ENCODE measurements at regions of chr3 and their contacts with region 1.

Region 1: GRCh38 chr3:113696658-113697499 is 437 bp upstream of the USF3 start:
- DNase-seq: peak; percentile 98 to 100
- H3K4me3 ChIP-seq: peak overlapping the region; percentile 93 to 98
- H3K27ac ChIP-seq: peak overlapping the region; percentile 98 to 99
- H3K4me1 ChIP-seq: peaks cover 0 to 17% of the 10 kb centered on the region in 2 donors
- H3K27me3 ChIP-seq: no peaks in the 10 kb centered on the region
- CTCF ChIP-seq: peak in 1 of 3 experiments; percentile 22

Region 2: DNA sequence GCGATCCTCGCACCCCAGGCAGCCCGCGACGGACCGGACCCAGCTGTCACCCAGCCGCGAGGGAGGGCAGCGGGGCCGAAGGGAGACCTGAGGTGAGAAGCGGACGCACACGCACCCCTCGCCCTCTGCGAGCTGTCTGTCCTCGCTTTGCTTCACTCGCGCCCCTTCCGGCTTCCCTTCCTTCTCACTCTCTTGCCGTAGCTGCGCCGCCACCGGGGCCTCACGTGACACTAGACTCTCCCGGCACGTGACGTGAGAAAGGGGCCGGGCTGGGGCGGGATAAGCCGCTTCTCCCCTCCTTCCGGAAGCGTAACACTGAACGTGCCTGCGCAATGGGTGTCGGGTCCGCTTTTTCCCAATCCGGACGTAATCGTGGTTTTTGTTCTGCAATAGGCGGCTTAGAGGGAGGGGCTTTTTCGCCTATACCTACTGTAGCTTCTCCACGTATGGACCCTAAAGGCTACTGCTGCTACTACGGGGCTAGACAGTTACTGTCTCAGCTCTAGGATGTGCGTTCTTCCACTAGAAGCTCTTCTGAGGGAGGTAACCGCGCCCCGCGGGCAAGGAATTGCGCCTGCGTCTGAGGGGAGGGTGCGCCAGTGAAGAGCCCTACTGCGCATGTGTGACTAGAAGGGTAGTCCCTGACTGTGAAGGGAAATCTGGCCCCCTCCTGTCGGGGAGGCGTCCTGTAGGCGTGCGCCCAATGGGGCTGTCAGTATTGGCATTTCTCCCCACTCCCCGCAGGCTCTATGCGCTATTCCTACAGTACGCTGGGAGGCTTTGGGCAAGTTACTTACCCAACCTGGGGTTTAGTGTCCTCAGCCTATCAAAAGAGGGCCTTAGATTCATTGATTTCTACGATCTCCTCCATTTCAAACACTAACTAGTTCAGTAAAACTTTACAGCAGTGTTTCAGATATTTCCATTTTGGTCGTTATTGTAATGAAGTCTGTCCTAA is 1134.9 kb before region 1 on chr3 and contains the starts of genes ATG3 and SLC35A5:
- intact Hi-C with region 1: loop called (anchors 5 kb)
- DNase-seq: peak; percentile 95 to 100
- H3K4me3 ChIP-seq: peak within 1 kb of the TSS; percentile 70 to 73
- H3K27ac ChIP-seq: peak within 1 kb of the TSS; percentile 95 to 98
- H3K4me1 ChIP-seq: peaks cover 8 to 17% of the 10 kb centered on the region in 2 donors
- H3K27me3 ChIP-seq: no peaks in the 10 kb centered on the region
- CTCF ChIP-seq: peak in 1 of 3 experiments; percentile 5
- total RNA-seq, gene ATG3: 73.3 TPM
- total RNA-seq, gene SLC35A5: 20.8 TPM

Region 3: GRCh38 chr3:112990672-112991602 is 705.9 kb before region 1 on chr3 and contains the start of gene GTPBP8:
- intact Hi-C with region 1: loop called (anchors 2 kb)
- DNase-seq: peak; percentile 58 to 94
- H3K4me3 ChIP-seq: peak within 1 kb of the TSS; percentile 70 to 91
- H3K27ac ChIP-seq: peak within 1 kb of the TSS; percentile 92 to 96
- H3K4me1 ChIP-seq: peaks cover 2 to 5% of the 10 kb centered on the region in 2 donors
- H3K27me3 ChIP-seq: no peaks in the 10 kb centered on the region
- CTCF ChIP-seq: peak in 1 of 3 experiments; percentile 11
- total RNA-seq, gene GTPBP8: 1.6 TPM

Region 4: DNA sequence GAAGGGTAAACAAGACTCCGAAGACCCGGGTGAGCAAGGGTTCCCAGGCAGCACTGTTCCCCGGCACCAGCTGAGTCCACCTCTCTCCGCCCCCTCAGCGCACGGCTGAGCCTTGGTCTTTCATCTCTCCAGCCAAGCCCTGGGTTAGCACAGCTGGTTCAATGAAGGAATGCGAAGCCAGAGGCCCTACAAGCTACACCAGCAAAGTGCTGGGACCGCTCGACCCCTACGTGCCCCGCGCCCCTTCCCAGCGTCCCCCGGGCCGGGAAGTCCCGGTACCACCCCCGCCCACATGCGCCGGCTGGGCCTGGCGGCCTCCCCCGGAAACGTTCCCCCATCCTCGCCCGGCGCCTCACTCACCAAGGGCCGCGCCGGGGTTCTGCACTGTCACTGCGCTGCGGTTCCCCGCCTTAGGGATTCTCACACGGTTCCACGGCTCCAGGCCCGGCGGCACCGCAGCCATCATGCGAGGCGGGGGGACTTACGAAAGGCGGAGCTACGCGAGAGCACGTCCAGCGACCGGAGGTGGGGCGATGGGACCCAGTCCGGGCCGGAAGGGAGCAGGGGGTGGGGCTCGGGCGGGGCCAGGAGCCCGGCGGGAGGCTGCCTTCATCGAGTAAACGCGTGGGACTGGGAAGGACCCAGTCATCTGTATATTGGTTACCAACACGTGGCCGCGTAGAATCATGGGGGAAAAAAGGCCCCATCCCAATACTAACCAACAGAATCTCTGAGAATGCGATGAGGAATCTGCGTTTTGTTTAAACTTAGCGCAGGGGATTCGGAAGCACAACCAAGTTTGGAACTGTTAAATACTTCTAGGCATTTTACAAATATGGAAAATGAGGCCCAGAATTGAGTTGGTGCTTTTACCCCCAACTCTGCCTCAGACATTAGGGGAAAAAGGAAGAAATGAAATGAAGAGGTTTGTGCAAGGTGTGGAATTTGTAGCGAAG is 677.4 kb before region 1 on chr3:
- intact Hi-C with region 1: loop called (anchors 5 kb)
- DNase-seq: peak; percentile 51 to 95
- H3K4me3 ChIP-seq: peak overlapping the region; percentile 75 to 76
- H3K27ac ChIP-seq: peak overlapping the region; percentile 93 to 95
- H3K4me1 ChIP-seq: peaks cover 9 to 13% of the 10 kb centered on the region in 2 donors
- H3K27me3 ChIP-seq: no peaks in the 10 kb centered on the region
- CTCF ChIP-seq: no peak

Region 5: GRCh38 chr3:113514265-113514769 is 182.6 kb before region 1 on chr3:
- intact Hi-C with region 1: loop called (anchors 1 kb)
- DNase-seq: no peak
- H3K4me3 ChIP-seq: peak overlapping the region; percentile 56 to 84
- H3K27ac ChIP-seq: peak overlapping the region; percentile 76 to 81
- H3K4me1 ChIP-seq: no peaks in the 10 kb centered on the region
- H3K27me3 ChIP-seq: no peaks in the 10 kb centered on the region
- CTCF ChIP-seq: no peak

Region 6: DNA sequence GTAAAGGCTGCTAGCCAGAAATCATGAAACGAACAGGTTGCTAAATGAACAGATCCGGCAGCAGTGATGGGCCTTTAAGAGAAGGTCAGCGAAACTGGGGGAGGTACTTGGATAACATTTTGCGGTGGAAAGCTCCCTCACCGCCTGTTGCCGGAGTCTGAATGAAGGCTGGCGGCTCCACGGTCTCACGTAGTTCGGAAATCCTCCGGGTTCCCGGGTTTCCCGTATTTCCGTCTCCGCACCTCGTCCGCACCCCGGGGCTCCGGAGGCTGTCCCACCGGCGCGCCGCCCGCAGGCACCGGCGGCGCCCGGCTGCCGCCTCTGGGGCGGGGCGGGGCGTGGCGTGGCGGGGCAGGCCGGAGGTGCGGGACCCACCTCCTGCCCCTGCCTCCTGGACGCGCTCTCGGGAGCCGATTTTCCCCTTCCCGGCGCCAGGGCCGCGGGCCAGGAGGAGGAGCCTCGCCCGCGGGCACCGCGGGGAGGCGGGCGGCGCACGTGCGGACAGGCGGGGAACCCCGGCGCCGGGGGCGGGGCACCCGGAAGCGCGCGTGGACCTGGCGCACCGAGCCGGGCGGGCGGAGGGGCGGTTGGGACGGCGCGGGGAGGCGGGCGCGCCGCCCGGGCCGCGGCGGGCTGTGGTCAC is 250.6 kb after region 1 on chr3 and contains the start of gene ZDHHC23:
- intact Hi-C with region 1: loop called (anchors 1 kb)
- DNase-seq: peak in 1 of 2 donors; percentile 85
- H3K4me3 ChIP-seq: peak within 1 kb of the TSS; percentile 70 to 82
- H3K27ac ChIP-seq: peak within 1 kb of the TSS; percentile 60 to 68
- H3K4me1 ChIP-seq: no peaks in the 10 kb centered on the region
- H3K27me3 ChIP-seq: no peaks in the 10 kb centered on the region
- CTCF ChIP-seq: no peak
- total RNA-seq, gene ZDHHC23: 4.4 TPM

Region 7: GRCh38 chr3:115658337-115659181 is 1961.7 kb after region 1 on chr3:
- intact Hi-C with region 1: loop called (anchors 5 kb)
- DNase-seq: peak; percentile 29 to 91
- H3K4me3 ChIP-seq: peak overlapping the region; percentile 57 to 88
- H3K27ac ChIP-seq: peak overlapping the region; percentile 95 to 96
- H3K4me1 ChIP-seq: peaks cover 3 to 12% of the 10 kb centered on the region in 2 donors
- H3K27me3 ChIP-seq: no peaks in the 10 kb centered on the region
- CTCF ChIP-seq: no peak

Measured in ascending aorta (tissue), 2 donors.